Activated CD8-positive, alpha-beta memory T cell treated with anti-CD3 and anti-CD28 coated beads, Interleukin-2, amount 10 ng/mL, durations not matched to agents 7 days and 5 days (primary cell): ENCODE measurements at regions of chr19 and their contacts with region 1.

Region 1: GRCh38 chr19:47013041-47013517 is 6.6 kb upstream of the NPAS1 start:
- DNase-seq: peak; percentile 69
- ATAC-seq: peak; percentile 76
- H3K4me3 Mint-ChIP-seq: no peak overlapping the region
- H3K27ac Mint-ChIP-seq: no peak overlapping the region
- H3K4me1 Mint-ChIP-seq: peaks cover 8% of the 10 kb centered on the region
- H3K27me3 Mint-ChIP-seq: peaks cover 16% of the 10 kb centered on the region

Region 2: GRCh38 chr19:46840136-46840942 is 172.7 kb before region 1 on chr19:
- CTCF ChIA-PET with region 1: interaction called, 11 read pairs
- DNase-seq: peak; percentile 63
- ATAC-seq: peak; percentile 82
- H3K4me3 Mint-ChIP-seq: no peak overlapping the region
- H3K27ac Mint-ChIP-seq: no peak overlapping the region
- H3K4me1 Mint-ChIP-seq: peaks cover 3% of the 10 kb centered on the region
- H3K27me3 Mint-ChIP-seq: no peaks in the 10 kb centered on the region

Region 3: DNA sequence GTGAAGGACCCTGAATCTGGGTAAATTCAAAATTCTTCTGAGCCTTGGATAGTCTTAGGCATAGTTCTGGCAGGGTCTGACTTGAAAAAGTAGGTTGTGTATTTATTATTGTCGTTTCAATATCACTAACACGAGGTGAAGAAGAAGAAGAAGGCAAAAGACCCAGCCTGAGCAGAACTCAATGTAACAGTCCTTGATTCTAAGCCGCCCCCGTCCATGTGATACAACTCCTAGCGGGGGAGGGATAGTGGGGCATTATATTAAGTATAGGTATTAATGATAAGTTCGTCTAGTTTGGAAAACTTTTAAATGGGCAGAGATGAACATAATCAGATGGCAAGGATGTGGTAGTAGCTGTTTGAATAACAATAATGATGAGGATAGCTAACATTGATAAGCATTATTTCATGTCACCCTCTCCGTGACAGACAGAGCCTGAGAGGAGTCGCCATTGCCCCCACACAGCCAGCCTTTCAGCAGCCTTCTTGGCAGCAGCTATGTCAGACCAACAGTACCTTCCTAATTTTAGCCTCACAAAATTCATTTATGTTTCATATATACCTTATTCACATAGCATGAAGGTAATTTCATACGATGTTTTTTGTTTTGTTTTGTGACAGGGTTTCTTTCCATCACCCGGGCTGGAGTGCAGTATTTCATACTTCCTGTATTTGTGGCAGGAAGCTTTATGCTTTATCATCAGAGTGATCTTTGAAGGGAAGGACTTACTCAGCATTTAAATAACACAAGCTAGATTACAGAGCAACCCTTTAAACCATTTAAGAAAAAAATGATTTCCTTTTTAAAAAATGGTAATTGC is 57.9 kb before region 1 on chr19:
- CTCF ChIA-PET with region 1: interaction called, 10 read pairs
- DNase-seq: peak; percentile 69
- ATAC-seq: peak; percentile 81
- H3K4me3 Mint-ChIP-seq: peak overlapping the region; percentile 76
- H3K27ac Mint-ChIP-seq: peak overlapping the region; percentile 100
- H3K4me1 Mint-ChIP-seq: peaks cover 82% of the 10 kb centered on the region
- H3K27me3 Mint-ChIP-seq: no peaks in the 10 kb centered on the region

Region 4: GRCh38 chr19:47028195-47028601 is 15.1 kb after region 1 on chr19:
- CTCF ChIA-PET with region 1: interaction called, 69 read pairs
- DNase-seq: no peak
- ATAC-seq: no peak
- H3K4me3 Mint-ChIP-seq: no peak overlapping the region
- H3K27ac Mint-ChIP-seq: no peak overlapping the region
- H3K4me1 Mint-ChIP-seq: peaks cover 11% of the 10 kb centered on the region
- H3K27me3 Mint-ChIP-seq: peaks cover 69% of the 10 kb centered on the region

Region 5: DNA sequence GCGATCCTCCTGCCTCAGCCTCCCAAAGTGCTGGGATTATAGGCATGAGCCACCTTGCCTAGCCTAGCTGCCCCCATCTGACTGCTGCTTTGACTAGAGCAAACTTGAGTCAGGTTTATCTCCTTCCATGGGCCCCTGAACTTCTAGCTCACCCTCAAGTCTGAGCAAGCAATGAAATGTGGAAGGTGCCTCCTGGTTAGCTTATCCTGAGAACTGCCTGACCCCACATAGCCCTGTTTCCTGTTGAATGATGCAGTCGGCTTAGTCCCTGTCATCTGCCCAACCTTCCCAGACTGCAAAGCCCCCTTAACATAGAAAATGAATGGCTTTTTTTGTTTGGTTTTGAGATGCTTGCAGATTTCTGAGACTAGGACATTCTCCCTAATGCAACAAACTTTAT is 44.2 kb after region 1 on chr19:
- CTCF ChIA-PET with region 1: interaction called, 12 read pairs
- DNase-seq: no peak
- ATAC-seq: no peak
- H3K4me3 Mint-ChIP-seq: no peak overlapping the region
- H3K27ac Mint-ChIP-seq: no peak overlapping the region
- H3K4me1 Mint-ChIP-seq: no peaks in the 10 kb centered on the region
- H3K27me3 Mint-ChIP-seq: peaks cover 20% of the 10 kb centered on the region

Region 6: DNA sequence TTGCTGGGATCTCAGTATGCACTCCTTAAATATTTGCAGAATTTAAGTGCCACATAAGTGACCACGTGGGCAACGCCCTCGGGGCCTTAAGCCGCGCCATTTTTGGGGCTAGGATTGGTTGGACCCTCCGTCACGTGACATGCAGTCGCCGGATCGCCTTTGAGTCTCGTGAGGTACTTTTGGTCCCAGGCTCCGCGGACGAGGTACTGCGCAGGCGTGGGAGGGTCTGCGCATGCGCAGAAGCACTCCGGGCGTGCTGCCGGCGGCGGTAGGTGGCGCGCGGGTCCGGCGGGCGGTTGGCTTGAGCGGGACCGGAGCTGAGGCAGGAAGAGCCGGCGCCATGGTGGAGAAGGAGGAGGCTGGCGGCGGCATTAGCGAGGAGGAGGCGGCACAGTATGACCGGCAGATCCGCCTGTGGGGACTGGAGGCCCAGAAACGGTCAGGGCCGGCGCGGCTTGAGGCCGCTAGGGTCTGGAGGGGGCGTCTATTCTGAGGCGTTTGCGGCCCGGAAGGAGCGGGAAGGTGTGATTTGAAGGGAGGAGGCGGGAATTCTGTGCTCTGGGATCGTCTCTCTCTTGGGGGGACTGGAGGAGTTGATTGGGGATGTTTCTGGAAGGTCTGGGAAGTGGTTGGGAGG is 117.6 kb after region 1 on chr19 and contains the start of gene SAE1:
- CTCF ChIA-PET with region 1: interaction called, 21 read pairs
- DNase-seq: peak; percentile 95
- ATAC-seq: peak; percentile 90
- H3K4me3 Mint-ChIP-seq: peak within 1 kb of the TSS; percentile 96
- H3K27ac Mint-ChIP-seq: peak within 1 kb of the TSS; percentile 98
- H3K4me1 Mint-ChIP-seq: peaks cover 46% of the 10 kb centered on the region
- H3K27me3 Mint-ChIP-seq: no peaks in the 10 kb centered on the region
- total RNA-seq, gene SAE1: 153 to 171 TPM

Region 7: GRCh38 chr19:47243776-47244547 is 230.9 kb after region 1 on chr19:
- CTCF ChIA-PET with region 1: interaction called, 11 read pairs
- DNase-seq: peak; percentile 96
- ATAC-seq: peak; percentile 84
- H3K4me3 Mint-ChIP-seq: peak overlapping the region; percentile 78
- H3K27ac Mint-ChIP-seq: peak overlapping the region; percentile 91
- H3K4me1 Mint-ChIP-seq: peaks cover 36% of the 10 kb centered on the region
- H3K27me3 Mint-ChIP-seq: peaks cover 3% of the 10 kb centered on the region